Breast epithelium (tissue), 4 donors: ENCODE measurements at regions of chr2 and their contacts with region 1.

Region 1: DNA sequence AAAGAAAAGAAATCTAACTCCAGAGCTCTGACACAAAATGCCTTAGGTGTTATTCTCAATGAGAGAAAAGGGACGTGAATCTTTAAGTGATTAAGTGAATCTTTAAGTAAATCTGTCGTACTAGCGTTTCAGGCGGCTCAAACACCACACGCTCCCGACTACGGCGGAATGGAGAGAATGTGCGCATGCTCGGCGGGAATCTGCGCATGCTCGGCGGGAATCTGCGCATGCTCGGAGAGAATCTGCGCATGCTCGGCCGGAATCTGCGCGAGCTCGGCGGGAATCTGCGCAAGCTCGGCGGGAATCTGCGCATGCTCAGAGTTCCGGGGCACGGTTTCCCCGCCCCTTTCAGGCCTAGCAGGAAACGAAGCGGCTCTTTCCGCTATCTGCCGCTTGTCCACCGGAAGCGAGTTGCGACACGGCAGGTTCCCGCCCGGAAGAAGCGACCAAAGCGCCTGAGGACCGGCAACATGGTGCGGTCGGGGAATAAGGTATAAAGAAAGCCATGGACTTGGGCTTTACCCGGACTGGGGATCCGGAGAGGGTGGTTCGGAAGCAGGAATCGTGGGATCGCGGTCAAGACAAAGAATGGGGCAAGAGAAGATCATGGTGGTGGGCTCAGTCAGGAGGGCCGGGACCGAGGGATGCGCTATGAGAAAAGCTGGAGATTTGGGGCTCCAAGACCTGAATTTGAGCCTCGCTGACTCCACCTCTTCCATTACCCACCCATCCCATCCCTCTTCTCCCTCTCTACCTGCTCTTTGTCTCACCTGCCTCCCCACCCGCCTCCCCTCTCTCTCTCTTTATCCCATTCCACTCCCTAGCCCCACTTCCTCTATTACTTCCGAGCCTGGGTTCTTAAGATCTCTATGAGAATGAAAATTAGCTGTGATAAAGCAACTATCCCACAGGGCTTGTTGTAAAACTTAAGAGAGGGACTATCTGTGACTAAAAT is at the start of gene XRCC5:
- DNase-seq: peak; percentile 93 to 97
- H3K4me3 ChIP-seq: peak within 1 kb of the TSS; percentile 76 to 92 (median 79)
- H3K27ac ChIP-seq: peak within 1 kb of the TSS; percentile 91 to 94
- H3K4me1 ChIP-seq: peaks cover 0 to 14% of the 10 kb centered on the region in 2 donors
- H3K27me3 ChIP-seq: no peaks in the 10 kb centered on the region
- CTCF ChIP-seq: no peak
- POLR2A ChIP-seq: peak; percentile 47
- total RNA-seq, gene XRCC5: 134 to 227 (median 188) TPM

Region 2: GRCh38 chr2:216057688-216058193 is 51.5 kb before region 1 on chr2:
- intact Hi-C with region 1: no loop called
- DNase-seq: no peak
- H3K4me3 ChIP-seq: peak overlapping the region in 2 of 3 donors; percentile 12 to 14
- H3K27ac ChIP-seq: peak overlapping the region; percentile 36 to 65
- H3K4me1 ChIP-seq: no peaks in the 10 kb centered on the region
- H3K27me3 ChIP-seq: no peaks in the 10 kb centered on the region
- CTCF ChIP-seq: no peak
- POLR2A ChIP-seq: no peak

Region 3: GRCh38 chr2:216666461-216667233 is 557.4 kb after region 1 on chr2:
- intact Hi-C with region 1: loop called (anchors 10 kb)
- DNase-seq: peak; percentile 67 to 75
- H3K4me3 ChIP-seq: no peak overlapping the region
- H3K27ac ChIP-seq: no peak overlapping the region
- H3K4me1 ChIP-seq: peaks cover 0 to 9% of the 10 kb centered on the region in 2 donors
- H3K27me3 ChIP-seq: no peaks in the 10 kb centered on the region
- CTCF ChIP-seq: peak; percentile 93 to 99 (median 97)
- POLR2A ChIP-seq: no peak